ENCODE measurements at regions of chr19 and their contacts with region 1.

Region 1: GRCh38 chr19:14347999-14348889 is 33.0 kb upstream of the ADGRE5 start:
- DNase-seq: peak; percentile 32 to 95 (median 65)

Region 2: DNA sequence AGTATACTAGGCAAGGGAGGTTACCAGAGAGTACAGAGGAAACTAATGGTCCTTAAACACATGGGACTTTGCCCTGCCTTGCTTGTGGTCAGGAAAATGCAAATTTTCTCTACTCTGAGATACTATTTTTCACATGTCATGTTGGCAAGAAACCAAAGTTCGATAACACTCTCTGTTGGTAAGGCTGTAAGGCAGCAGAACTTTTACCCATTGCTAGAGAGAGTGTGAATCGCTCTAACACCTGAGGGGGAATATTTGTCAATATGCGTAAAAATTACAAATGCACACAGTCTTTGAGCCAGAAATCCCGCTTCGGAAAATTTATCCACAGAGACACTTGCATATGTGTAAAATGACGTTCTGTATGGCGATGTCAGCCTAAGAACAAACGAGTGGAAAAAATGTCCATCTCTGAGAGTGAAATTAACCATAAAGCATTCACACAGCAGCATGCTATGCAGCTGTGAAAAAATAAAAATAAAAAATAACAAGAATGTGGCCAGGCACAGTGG is 332.7 kb before region 1 on chr19:
- intact Hi-C with region 1: no loop called
- DNase-seq: no peak

Region 3: GRCh38 chr19:14147797-14148605 is 200.2 kb before region 1 on chr19:
- intact Hi-C with region 1: loop called (anchors 2 kb)
- DNase-seq: peak; percentile 58 to 97 (median 78)

Region 4: GRCh38 chr19:14198384-14199376 is 149.6 kb before region 1 on chr19:
- intact Hi-C with region 1: loop called (anchors 5 kb)
- DNase-seq: no peak

Region 5: DNA sequence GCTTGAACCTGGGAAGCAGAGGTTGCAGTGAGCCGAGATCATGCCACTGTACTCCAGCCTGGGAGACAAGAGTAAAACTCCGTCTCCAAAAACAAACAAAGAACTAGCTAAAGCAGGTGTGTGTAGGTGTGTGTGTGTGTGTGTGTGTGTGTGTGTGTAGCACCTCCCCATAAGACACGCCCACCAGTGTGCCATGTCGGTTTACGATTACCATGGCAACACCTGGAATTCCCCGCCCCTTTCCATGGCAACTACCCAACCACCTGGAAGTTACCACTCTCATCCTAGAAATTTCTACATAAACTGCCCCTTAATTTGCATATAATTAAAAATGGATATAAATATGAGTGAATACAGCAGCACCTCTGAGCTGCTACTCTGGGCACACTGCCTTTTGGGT is 47.9 kb before region 1 on chr19:
- intact Hi-C with region 1: no loop called
- DNase-seq: peak in 1 of 10 donors; percentile 38

Region 6: GRCh38 chr19:14402332-14403144 is 54.3 kb after region 1 on chr19:
- intact Hi-C with region 1: no loop called
- DNase-seq: peak in 1 of 10 donors; percentile 67